ENCODE measurements at regions of chr1 and their contacts with region 1.

Region 1: DNA sequence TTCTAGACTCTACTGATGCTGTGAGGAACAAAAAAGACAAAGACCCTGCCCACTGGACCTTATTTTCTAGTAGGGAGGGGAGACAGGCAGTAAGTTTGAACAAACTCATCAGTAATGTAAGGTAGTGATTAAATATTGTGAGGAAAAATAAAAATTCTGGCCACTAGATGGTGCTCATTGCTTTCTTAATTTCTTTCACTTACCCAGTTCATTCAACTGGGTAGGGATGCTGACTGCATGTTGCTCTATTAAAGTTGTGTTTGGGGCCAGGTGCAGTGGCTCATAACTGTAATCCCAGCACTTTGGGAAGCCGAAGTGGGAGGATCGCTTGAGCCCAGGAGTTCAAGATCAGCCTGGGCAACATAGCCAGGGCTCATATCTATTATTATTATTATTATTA is 6.3 kb upstream of the KYAT3 start:
- DNase-seq: peak in 1 of 2 experiments; percentile 64
- H3K4me3 ChIP-seq: no peak overlapping the region
- H3K27ac ChIP-seq: no peak overlapping the region
- H3K4me1 ChIP-seq: peaks cover 4% of the 10 kb centered on the region; the same call in 1 of the 2 replicates
- H3K27me3 ChIP-seq: no peaks in the 10 kb centered on the region
- CTCF ChIP-seq: peak; percentile 87

Region 2: DNA sequence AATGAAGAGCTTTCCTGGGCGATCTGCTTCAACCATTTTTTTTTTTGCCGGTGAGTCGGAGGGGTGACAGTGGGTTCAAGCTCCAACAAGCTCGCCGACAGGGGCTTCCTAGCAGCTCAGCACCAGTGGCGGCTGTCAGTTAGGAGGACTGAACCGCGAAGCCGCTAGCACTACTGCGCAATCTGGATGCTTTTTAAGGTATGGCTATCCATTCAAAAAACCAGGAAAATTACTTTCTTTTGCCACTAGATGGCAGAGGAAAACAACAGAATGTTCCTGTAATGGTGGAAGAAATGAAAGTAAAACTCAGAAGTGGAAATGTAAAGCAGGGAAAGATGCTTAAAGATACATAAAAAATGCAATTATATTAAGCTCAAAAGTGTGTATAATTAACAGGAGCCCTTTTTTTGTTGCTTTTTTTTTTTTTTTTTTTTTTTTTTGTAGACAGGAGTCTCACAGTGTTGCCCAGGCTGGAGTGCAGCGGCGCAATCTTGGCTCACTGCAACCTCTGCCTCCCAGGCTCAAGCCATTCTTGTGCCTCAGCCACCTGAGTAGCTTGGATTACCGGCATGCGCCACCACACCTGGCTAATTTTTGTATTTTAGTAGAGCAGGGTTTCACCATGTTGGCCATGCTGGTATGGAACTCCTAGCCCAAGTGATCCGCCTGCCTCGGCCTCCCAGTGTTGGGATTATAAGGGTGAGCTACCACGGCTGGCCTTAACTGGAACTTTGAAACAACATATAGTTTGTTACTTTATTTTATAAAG is 14.7 kb before region 1 on chr1:
- CTCF ChIA-PET with region 1: interaction called, 5 read pairs
- POLR2A ChIA-PET with region 1: interaction called, 20 read pairs
- intact Hi-C with region 1: no loop called
- DNase-seq: peak in 1 of 2 experiments; percentile 65
- H3K4me3 ChIP-seq: no peak overlapping the region
- H3K27ac ChIP-seq: no peak overlapping the region
- H3K4me1 ChIP-seq: peaks cover 18% of the 10 kb centered on the region
- H3K27me3 ChIP-seq: no peaks in the 10 kb centered on the region
- CTCF ChIP-seq: peak; percentile 84

Region 3: DNA sequence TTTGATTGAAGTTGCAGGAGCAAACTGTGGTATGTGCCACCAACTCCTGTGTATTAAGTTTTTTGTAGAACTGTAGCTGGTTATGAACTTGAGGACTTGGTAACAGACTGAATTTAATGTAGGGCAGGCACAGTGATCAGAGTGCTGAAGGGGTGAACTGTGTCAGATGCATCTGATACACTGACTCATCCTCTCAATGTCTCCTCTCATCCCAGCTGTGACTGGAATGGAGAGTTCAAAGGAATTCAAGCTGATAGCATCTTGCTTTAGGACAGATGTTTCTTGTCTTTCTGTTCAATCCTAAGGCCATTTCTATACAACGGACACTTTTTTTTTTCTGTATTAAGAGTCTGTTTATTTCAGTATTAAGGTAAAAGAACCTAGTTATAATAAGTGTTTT is 91.2 kb after region 1 on chr1:
- CTCF ChIA-PET with region 1: no interaction called
- POLR2A ChIA-PET with region 1: interaction called, 35 read pairs
- intact Hi-C with region 1: no loop called
- DNase-seq: no peak
- H3K4me3 ChIP-seq: no peak overlapping the region
- H3K27ac ChIP-seq: no peak overlapping the region
- H3K4me1 ChIP-seq: no peaks in the 10 kb centered on the region
- H3K27me3 ChIP-seq: no peaks in the 10 kb centered on the region
- CTCF ChIP-seq: no peak

Region 4: GRCh38 chr1:89358287-89358893 is 359.7 kb after region 1 on chr1:
- CTCF ChIA-PET with region 1: no interaction called
- POLR2A ChIA-PET with region 1: no interaction called
- intact Hi-C with region 1: loop called (anchors 1 kb)
- DNase-seq: peak; percentile 63 to 65
- H3K4me3 ChIP-seq: no peak overlapping the region
- H3K27ac ChIP-seq: no peak overlapping the region
- H3K4me1 ChIP-seq: 0 out of 2 replicates have a peak, but pooled peaks cover 6% of the 10 kb centered on the region
- H3K27me3 ChIP-seq: no peaks in the 10 kb centered on the region
- CTCF ChIP-seq: peak; percentile 89

Region 5: GRCh38 chr1:89454845-89455521 is 456.3 kb after region 1 on chr1:
- CTCF ChIA-PET with region 1: no interaction called
- POLR2A ChIA-PET with region 1: no interaction called
- intact Hi-C with region 1: loop called (anchors 1 kb)
- DNase-seq: peak; percentile 36 to 56
- H3K4me3 ChIP-seq: no peak overlapping the region
- H3K27ac ChIP-seq: no peak overlapping the region
- H3K4me1 ChIP-seq: 0 out of 2 replicates have a peak, but pooled peaks cover 3% of the 10 kb centered on the region
- H3K27me3 ChIP-seq: no peaks in the 10 kb centered on the region
- CTCF ChIP-seq: peak; percentile 94

Measured in PC-9 (cell line).